IMR-90 (cell line): ENCODE measurements at regions of chr4 and their contacts with region 1.

Region 1: DNA sequence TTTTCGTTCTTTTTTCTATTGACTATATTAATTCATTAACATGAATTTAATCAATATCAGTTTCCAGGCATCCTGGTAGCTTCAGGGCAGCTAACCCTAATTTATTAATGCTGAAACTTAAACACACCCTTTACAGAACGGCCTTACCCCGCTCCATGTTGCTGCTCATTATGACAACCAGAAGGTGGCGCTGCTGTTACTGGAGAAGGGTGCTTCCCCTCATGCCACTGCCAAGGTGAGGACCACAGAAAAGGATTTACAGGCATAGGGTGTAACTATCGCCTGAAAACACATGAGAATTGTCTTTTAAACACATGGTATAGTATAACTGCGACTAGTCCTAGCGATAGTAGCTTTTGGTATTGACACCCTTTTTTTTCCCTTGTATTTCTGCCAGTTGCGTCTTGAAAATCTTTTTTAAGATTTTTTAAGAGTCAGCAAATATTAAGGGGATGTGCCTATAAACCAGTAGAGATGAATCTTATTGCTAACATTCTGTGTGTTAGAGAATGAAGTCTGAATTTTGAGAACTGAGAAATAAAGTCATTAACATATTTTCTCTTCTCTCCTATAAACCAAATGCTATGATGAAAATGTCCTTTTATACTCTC is 229.0 kb downstream of the ANK2 start:
- DNase-seq: peak; percentile 79
- ATAC-seq: peak; percentile 99
- H3K4me3 ChIP-seq: no peak overlapping the region
- H3K27ac ChIP-seq: no peak overlapping the region
- H3K4me1 ChIP-seq: no peaks in the 10 kb centered on the region
- H3K27me3 ChIP-seq: peaks cover 7% of the 10 kb centered on the region
- CTCF ChIP-seq: peak; percentile 85
- POLR2A ChIP-seq: no peak
- RAD21 ChIP-seq: peak; percentile 88

Region 2: GRCh38 chr4:112321776-112322684 is 956.4 kb before region 1 on chr4:
- CTCF ChIA-PET with region 1: no interaction called
- POLR2A ChIA-PET with region 1: no interaction called
- dilution Hi-C with region 1: no loop called
- in situ Hi-C with region 1: no loop called
- intact Hi-C with region 1: no loop called
- DNase-seq: peak; percentile 60
- ATAC-seq: peak; percentile 85
- H3K4me3 ChIP-seq: no peak overlapping the region
- H3K27ac ChIP-seq: no peak overlapping the region
- H3K4me1 ChIP-seq: no peaks in the 10 kb centered on the region
- H3K27me3 ChIP-seq: no peaks in the 10 kb centered on the region
- CTCF ChIP-seq: peak; percentile 77
- POLR2A ChIP-seq: no peak
- RAD21 ChIP-seq: peak; percentile 58

Region 3: GRCh38 chr4:113114884-113115283 is 163.5 kb before region 1 on chr4:
- CTCF ChIA-PET with region 1: no interaction called
- POLR2A ChIA-PET with region 1: no interaction called
- dilution Hi-C with region 1: no loop called
- in situ Hi-C with region 1: no loop called
- intact Hi-C with region 1: loop called (anchors 5 kb)
- DNase-seq: no peak
- ATAC-seq: no peak
- H3K4me3 ChIP-seq: no peak overlapping the region
- H3K27ac ChIP-seq: no peak overlapping the region
- H3K4me1 ChIP-seq: no peaks in the 10 kb centered on the region
- H3K27me3 ChIP-seq: peaks cover 2% of the 10 kb centered on the region
- CTCF ChIP-seq: no peak
- POLR2A ChIP-seq: no peak
- RAD21 ChIP-seq: no peak

Region 4: DNA sequence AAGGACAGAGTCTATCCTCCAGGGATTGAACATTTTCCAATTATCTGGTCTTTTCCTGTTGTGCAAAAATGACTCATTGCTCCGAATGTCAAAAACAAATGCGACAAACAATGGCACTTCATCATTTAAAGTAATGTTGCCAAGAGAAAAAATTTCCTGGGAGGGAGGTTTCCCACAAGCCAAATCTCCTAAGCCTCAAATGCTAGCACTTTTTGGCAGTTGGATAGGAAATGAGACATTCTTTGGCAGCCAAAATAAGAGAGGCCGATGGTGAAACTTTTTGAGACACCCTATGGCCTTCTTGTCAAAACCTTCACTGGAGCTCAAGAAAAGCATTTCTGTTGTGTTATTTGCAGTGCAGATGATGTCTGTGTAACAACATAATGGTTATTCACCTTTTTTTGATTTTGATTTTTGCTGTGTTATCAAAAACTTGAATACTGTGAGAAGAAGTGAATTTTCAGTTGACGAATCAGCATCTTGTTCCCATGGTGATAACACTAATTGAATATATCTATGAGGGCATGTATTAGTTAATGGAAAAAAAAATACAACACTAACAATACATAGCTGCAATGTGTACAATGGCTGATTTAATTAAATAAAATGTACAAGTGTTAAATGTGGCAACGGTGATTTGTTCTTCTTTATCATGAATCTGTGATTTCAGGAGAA is 104.8 kb after region 1 on chr4:
- CTCF ChIA-PET with region 1: interaction called, 3 read pairs
- POLR2A ChIA-PET with region 1: no interaction called
- dilution Hi-C with region 1: no loop called
- in situ Hi-C with region 1: no loop called
- intact Hi-C with region 1: loop called (anchors 2 kb)
- DNase-seq: peak; percentile 67
- ATAC-seq: peak; percentile 49; the same call in 1 of the 2 replicates
- H3K4me3 ChIP-seq: no peak overlapping the region
- H3K27ac ChIP-seq: no peak overlapping the region
- H3K4me1 ChIP-seq: peaks cover 6% of the 10 kb centered on the region
- H3K27me3 ChIP-seq: no peaks in the 10 kb centered on the region; the same call in 1 of the 2 replicates
- CTCF ChIP-seq: no peak
- POLR2A ChIP-seq: no peak
- RAD21 ChIP-seq: no peak

Region 5: GRCh38 chr4:113584407-113585150 is 306.1 kb after region 1 on chr4:
- CTCF ChIA-PET with region 1: no interaction called
- POLR2A ChIA-PET with region 1: no interaction called
- dilution Hi-C with region 1: no loop called
- in situ Hi-C with region 1: no loop called
- intact Hi-C with region 1: no loop called
- DNase-seq: peak; percentile 83
- ATAC-seq: peak; percentile 87
- H3K4me3 ChIP-seq: no peak overlapping the region
- H3K27ac ChIP-seq: no peak overlapping the region
- H3K4me1 ChIP-seq: peaks cover 4% of the 10 kb centered on the region
- H3K27me3 ChIP-seq: no peaks in the 10 kb centered on the region
- CTCF ChIP-seq: no peak
- POLR2A ChIP-seq: no peak
- RAD21 ChIP-seq: no peak

Region 6: DNA sequence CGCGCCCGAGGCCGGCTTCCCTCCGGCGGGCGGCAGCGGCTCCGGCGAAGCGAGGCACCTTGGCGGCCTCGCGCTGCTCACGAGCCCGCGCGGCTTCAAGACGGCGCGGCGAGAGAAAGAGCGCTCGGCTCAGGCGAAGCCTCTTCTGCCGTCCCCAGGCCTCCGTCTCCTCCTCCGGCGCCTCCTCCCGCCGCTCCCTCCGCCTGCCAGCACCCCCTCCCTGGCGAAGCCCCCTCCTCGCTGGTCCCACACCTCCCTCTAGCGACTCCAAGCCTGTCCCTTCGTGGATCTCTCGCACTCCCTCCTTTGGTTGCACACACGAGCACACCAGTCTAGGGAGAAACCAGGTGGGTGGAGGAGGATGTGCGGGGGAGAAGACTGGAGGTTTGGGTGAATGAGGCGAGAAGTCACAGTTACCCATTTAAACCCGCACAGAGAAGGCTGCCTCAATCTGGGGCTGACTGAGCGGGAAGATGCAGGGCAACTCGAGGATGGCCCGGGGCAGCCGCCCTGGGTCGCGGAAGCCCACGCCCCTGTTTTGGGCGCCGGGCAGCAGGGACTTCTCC is 483.3 kb after region 1 on chr4 and contains the start of gene CAMK2D:
- CTCF ChIA-PET with region 1: no interaction called
- POLR2A ChIA-PET with region 1: no interaction called
- dilution Hi-C with region 1: no loop called
- in situ Hi-C with region 1: no loop called
- intact Hi-C with region 1: loop called (anchors 2 kb)
- DNase-seq: peak; percentile 89
- ATAC-seq: peak; percentile 50
- H3K4me3 ChIP-seq: peak within 1 kb of the TSS; percentile 93
- H3K27ac ChIP-seq: peak within 1 kb of the TSS; percentile 90
- H3K4me1 ChIP-seq: 0 out of 2 replicates have a peak, but pooled peaks cover 1% of the 10 kb centered on the region
- H3K27me3 ChIP-seq: no peaks in the 10 kb centered on the region
- CTCF ChIP-seq: peak; percentile 75
- POLR2A ChIP-seq: no peak; the same call in 1 of the 2 replicates
- RAD21 ChIP-seq: peak; percentile 66
- total RNA-seq, gene CAMK2D: 156 and 181 TPM in 2 replicates

Region 7: DNA sequence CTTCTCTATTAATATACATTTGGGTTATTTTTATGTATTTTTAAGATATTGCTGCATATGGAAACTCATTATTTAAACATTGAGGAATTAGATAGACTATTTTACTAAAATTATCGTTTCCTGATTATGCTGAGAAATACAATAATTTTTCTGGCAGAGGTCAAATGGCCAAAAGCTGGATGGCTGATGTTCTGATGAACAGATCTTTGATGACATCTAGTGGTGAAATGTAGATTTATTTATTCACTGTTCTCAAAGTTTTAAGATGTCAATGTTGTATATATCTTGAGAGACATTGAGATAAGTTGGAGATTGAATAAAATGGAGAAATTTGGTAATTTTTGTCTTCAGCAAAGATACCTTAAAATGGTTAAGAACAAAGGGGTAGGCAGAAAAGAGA is 1416.3 kb after region 1 on chr4:
- CTCF ChIA-PET with region 1: no interaction called
- POLR2A ChIA-PET with region 1: no interaction called
- dilution Hi-C with region 1: no loop called
- in situ Hi-C with region 1: no loop called
- intact Hi-C with region 1: loop called (anchors 5 kb)
- DNase-seq: peak; percentile 28
- ATAC-seq: no peak
- H3K4me3 ChIP-seq: no peak overlapping the region
- H3K27ac ChIP-seq: no peak overlapping the region
- H3K4me1 ChIP-seq: no peaks in the 10 kb centered on the region
- H3K27me3 ChIP-seq: no peaks in the 10 kb centered on the region
- CTCF ChIP-seq: peak; percentile 56
- POLR2A ChIP-seq: no peak
- RAD21 ChIP-seq: peak; percentile 53